ENCODE measurements at regions of chr9 and their contacts with region 1.

Region 1: GRCh38 chr9:130693426-130694191 is at the start of gene EXOSC2:
- DNase-seq: peak; percentile 84 to 100 (median 98)
- ATAC-seq: peak; percentile 99 to 100 (median 100)
- H3K4me3 ChIP-seq: peak within 1 kb of the TSS; percentile 68 to 93
- H3K4me3 Mint-ChIP-seq: peak within 1 kb of the TSS; percentile 88 to 98 (median 95)
- H3K27ac ChIP-seq: peak within 1 kb of the TSS; percentile 56
- H3K27ac Mint-ChIP-seq: peak within 1 kb of the TSS; percentile 96
- H3K4me1 ChIP-seq: peaks cover 6 to 38% of the 10 kb centered on the region in 2 experiments
- H3K4me1 Mint-ChIP-seq: peaks cover 39 to 50% (median 41%) of the 10 kb centered on the region in 3 donors
- H3K27me3 ChIP-seq: no peaks in the 10 kb centered on the region
- H3K27me3 Mint-ChIP-seq: peaks cover 0 to 4% of the 10 kb centered on the region in 2 donors
- total RNA-seq, gene EXOSC2: 49.1 to 59.1 (median 52.1) TPM

Region 2: GRCh38 chr9:129823935-129824601 is 869.5 kb before region 1 on chr9 and contains the start of gene TOR1A:
- CTCF ChIA-PET with region 1: no interaction called
- POLR2A ChIA-PET with region 1: no interaction called
- DNase-seq: peak; percentile 82 to 95 (median 90)
- ATAC-seq: peak; percentile 93 to 95 (median 94)
- H3K4me3 ChIP-seq: peak within 1 kb of the TSS; percentile 63 to 76
- H3K4me3 Mint-ChIP-seq: peak within 1 kb of the TSS; percentile 80 to 86 (median 85)
- H3K27ac ChIP-seq: peak within 1 kb of the TSS; percentile 23
- H3K27ac Mint-ChIP-seq: peak within 1 kb of the TSS; percentile 79 to 86
- H3K4me1 ChIP-seq: peaks cover 4 to 18% of the 10 kb centered on the region in 2 experiments
- H3K4me1 Mint-ChIP-seq: peaks cover 11 to 15% (median 11%) of the 10 kb centered on the region in 3 donors
- H3K27me3 ChIP-seq: no peaks in the 10 kb centered on the region
- H3K27me3 Mint-ChIP-seq: no peaks in the 10 kb centered on the region
- total RNA-seq, gene TOR1A: 16.6 to 39.3 (median 34.1) TPM

Region 3: GRCh38 chr9:130682490-130683121 is 11.0 kb before region 1 on chr9:
- CTCF ChIA-PET with region 1: interaction called in 1 of 2 experiments, 21 read pairs
- POLR2A ChIA-PET with region 1: no interaction called
- DNase-seq: peak in 25 of 35 experiments; percentile 8 to 78 (median 45)
- ATAC-seq: peak; percentile 36 to 52 (median 40)
- H3K4me3 ChIP-seq: peak overlapping the region; percentile 65 to 79
- H3K4me3 Mint-ChIP-seq: peak overlapping the region; percentile 88 to 97 (median 94)
- H3K27ac ChIP-seq: no peak overlapping the region
- H3K27ac Mint-ChIP-seq: peak overlapping the region; percentile 68 to 69
- H3K4me1 ChIP-seq: peaks cover 3 to 16% of the 10 kb centered on the region in 2 experiments
- H3K4me1 Mint-ChIP-seq: peaks cover 6 to 9% (median 8%) of the 10 kb centered on the region in 3 donors
- H3K27me3 ChIP-seq: peaks cover 2 to 52% of the 10 kb centered on the region in 2 experiments
- H3K27me3 Mint-ChIP-seq: peaks cover 0 to 7% of the 10 kb centered on the region in 2 donors

Region 4: GRCh38 chr9:131125128-131126058 is 431.8 kb after region 1 on chr9 and contains the start of gene NUP214:
- CTCF ChIA-PET with region 1: no interaction called
- POLR2A ChIA-PET with region 1: interaction called in 1 of 2 experiments, 14 read pairs
- DNase-seq: peak; percentile 98 to 100 (median 99)
- ATAC-seq: peak; percentile 98 to 99 (median 98)
- H3K4me3 ChIP-seq: peak within 1 kb of the TSS; percentile 77 to 95
- H3K4me3 Mint-ChIP-seq: peak within 1 kb of the TSS; percentile 95 to 100 (median 95)
- H3K27ac ChIP-seq: peak within 1 kb of the TSS; percentile 75
- H3K27ac Mint-ChIP-seq: peak within 1 kb of the TSS; percentile 97
- H3K4me1 ChIP-seq: peaks cover 11 to 22% of the 10 kb centered on the region in 2 experiments
- H3K4me1 Mint-ChIP-seq: peaks cover 32 to 35% (median 34%) of the 10 kb centered on the region in 3 donors
- H3K27me3 ChIP-seq: peaks cover 0 to 3% of the 10 kb centered on the region in 2 experiments
- H3K27me3 Mint-ChIP-seq: peaks cover 0 to 2% of the 10 kb centered on the region in 2 donors
- total RNA-seq, gene NUP214: 66.7 to 106 (median 68.5) TPM